H1 (cell line): ENCODE measurements at regions of chr3 and their contacts with region 1.

Region 1: GRCh38 chr3:79032686-79033318 is 735.0 kb downstream of the ROBO1 start:
- DNase-seq: no peak
- H3K4me3 ChIP-seq: no peak overlapping the region
- H3K27ac ChIP-seq: no peak overlapping the region
- H3K4me1 ChIP-seq: no peaks in the 10 kb centered on the region
- H3K27me3 ChIP-seq: no peaks in the 10 kb centered on the region
- CTCF ChIP-seq: peak in 2 of 3 experiments; percentile 34 to 39; a peak in 2 of 4 replicates
- EP300 ChIP-seq: no peak
- POLR2A ChIP-seq: no peak
- RAD21 ChIP-seq: peak; percentile 77 to 81

Region 2: DNA sequence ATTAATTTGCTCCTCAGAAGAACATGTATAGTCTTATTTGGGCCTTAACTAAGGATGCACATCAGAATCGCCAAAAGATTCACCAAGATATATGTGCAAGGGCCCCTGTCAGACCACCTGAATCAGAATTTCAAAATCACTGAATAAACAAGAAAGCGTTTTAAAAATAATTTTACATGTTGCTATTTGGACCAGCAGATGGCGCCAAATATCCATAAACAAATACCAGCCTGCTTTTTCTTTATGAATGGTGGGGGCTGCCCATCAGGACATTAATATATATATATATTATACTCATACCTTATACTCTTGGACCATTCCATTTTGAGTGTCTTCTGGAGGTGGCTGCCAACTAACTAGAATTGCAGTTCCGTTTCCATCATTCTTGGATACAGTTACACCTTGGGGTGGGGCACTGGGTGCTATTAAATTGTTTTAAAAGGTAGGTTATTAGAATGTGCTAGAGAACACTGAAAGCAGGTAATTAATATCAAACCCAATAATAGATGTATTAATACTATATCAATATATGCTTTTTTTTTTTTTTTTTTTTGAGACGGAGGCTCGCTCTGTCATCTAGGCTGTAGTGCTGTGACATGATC is 373.3 kb before region 1 on chr3:
- CTCF ChIA-PET with region 1: interaction called, 15 read pairs
- POLR2A ChIA-PET with region 1: no interaction called
- DNase-seq: no peak
- H3K4me3 ChIP-seq: no peak overlapping the region
- H3K27ac ChIP-seq: no peak overlapping the region
- H3K4me1 ChIP-seq: no peaks in the 10 kb centered on the region
- H3K27me3 ChIP-seq: no peaks in the 10 kb centered on the region
- CTCF ChIP-seq: peak in 2 of 3 experiments; percentile 32 to 53; a peak in 2 of 4 replicates
- EP300 ChIP-seq: no peak
- POLR2A ChIP-seq: no peak
- RAD21 ChIP-seq: peak; percentile 71 to 76

Region 3: DNA sequence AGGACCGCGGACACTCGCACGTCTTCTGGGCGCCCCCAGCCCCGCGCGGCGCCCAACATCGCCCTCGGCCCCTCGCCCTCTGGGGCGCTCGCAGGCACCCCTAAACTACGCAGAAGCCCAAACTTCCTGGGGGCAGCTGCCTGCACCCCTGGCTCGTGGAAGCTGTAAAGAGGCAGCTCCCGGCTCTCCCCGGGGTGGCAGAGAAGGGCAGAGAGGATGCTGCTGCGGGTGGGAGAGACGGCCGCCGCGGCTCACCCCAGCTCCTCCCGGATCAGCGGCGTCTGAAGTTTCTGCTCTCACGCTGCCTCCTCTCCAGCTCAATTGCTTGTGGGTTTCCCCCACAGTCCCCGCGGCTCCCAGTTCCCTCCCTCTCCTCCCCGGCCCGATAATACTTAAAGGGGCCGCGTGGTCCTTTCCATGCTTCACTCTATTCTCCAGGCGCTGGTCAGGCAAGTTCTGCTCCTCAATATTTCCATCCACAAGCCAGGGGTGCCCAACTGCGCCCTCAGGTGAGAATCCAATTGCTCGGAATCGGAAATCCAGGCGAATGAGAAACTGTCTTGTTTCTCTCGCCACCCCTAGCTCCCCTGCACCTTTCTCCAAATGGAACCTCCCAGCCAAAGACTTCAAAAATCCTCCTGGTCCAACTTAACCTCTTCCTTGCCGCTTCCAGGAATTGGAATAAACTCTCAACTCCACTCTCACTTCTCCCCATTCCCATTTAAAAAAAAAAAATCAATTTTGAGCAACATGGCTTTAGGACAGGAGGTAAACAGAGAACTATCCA is 13.5 kb before region 1 on chr3:
- CTCF ChIA-PET with region 1: interaction called, 10 read pairs
- POLR2A ChIA-PET with region 1: no interaction called
- DNase-seq: peak; percentile 73 to 83
- H3K4me3 ChIP-seq: peak overlapping the region; percentile 85 to 96 (median 92)
- H3K27ac ChIP-seq: peak overlapping the region; percentile 94
- H3K4me1 ChIP-seq: peaks cover 0 to 6% (median 2%) of the 10 kb centered on the region in 4 experiments; a peak in 3 of 7 replicates
- H3K27me3 ChIP-seq: no peaks in the 10 kb centered on the region
- CTCF ChIP-seq: no peak
- EP300 ChIP-seq: peak in 1 of 2 experiments; percentile 98; a peak in 2 of 3 replicates
- POLR2A ChIP-seq: peak in 1 of 2 experiments; percentile 57; a peak in 1 of 3 replicates
- RAD21 ChIP-seq: no peak

Region 4: DNA sequence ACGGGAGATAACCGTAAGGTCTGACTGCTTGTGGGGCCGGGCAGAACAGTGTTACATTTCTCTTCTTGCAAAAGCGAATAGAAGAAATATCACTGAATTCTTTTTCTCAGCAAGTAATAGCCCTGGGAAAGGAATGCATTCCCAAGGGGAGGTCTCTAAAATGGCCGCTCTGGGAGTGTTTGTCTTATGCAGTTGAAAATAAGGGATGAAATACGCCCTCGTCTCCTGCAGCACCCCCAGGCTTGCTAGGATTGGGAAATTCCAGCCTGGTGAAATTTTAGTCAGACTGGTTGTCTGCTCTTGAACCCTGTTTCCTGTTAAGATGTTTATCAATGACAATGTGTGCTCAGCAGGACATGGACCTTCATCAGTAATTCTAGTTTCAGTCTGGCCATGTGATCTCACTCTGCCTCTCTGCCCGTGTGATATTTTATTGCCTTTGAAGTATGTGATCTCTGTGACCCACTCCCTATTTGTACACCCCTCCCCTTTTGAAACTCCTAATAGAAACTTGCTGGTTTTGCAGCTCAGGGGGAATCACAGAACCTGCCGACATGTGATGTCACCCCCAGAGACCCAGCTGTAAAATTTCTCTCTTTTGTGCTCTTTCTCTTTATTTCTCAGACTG is 19.4 kb after region 1 on chr3:
- CTCF ChIA-PET with region 1: no interaction called
- POLR2A ChIA-PET with region 1: no interaction called
- DNase-seq: peak in 1 of 2 experiments; percentile 56
- H3K4me3 ChIP-seq: no peak overlapping the region
- H3K27ac ChIP-seq: no peak overlapping the region
- H3K4me1 ChIP-seq: no peaks in the 10 kb centered on the region
- H3K27me3 ChIP-seq: no peaks in the 10 kb centered on the region
- CTCF ChIP-seq: no peak
- EP300 ChIP-seq: peak; percentile 9 to 90; a peak in 1 of 3 replicates
- POLR2A ChIP-seq: no peak
- RAD21 ChIP-seq: no peak